MCF 10A (cell line): ENCODE measurements at regions of chr12 and their contacts with region 1.

Region 1: DNA sequence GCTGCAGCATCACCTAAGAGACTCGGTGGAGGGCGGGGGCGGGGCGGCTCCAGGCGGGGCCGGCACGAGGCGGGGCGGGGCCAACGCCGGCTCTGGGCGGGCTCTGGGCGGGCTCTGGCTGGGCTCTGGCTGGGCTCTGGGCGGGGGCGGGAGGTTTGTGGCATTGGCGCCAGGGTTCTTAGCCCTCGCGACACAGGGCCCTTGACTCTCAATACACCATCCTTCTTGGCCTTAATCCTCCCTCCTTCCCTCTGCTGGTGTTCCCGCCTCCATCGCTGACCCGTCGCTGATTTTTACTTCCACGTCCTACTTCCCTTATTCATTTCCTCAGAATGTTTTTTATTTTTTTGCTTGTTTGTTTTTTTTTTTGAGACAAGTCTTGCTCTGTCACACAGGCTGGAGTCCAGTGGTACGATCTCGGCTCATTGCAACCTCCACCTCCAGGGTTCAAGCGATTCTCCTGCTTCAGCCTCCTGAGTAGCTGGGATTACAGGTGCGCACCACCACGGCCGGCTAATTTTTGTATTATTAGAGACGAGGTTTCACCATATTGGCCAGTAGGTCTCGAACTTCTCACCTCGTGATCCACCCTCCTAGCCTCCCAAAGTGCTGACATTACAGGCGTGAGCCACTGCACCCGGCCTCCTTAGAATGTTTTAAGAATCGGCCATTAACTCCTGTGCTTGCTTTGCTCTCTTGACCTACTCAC is at the start of gene BLTP3B:
- DNase-seq: peak; percentile 82
- H3K4me3 Mint-ChIP-seq: peak within 1 kb of the TSS; percentile 89
- H3K27ac Mint-ChIP-seq: peak within 1 kb of the TSS; percentile 94
- H3K4me1 Mint-ChIP-seq: peaks cover 24% of the 10 kb centered on the region
- H3K27me3 Mint-ChIP-seq: no peaks in the 10 kb centered on the region
- CTCF ChIP-seq: no peak
- total RNA-seq, gene BLTP3B: 17.7 and 20.1 TPM in 2 replicates

Region 2: DNA sequence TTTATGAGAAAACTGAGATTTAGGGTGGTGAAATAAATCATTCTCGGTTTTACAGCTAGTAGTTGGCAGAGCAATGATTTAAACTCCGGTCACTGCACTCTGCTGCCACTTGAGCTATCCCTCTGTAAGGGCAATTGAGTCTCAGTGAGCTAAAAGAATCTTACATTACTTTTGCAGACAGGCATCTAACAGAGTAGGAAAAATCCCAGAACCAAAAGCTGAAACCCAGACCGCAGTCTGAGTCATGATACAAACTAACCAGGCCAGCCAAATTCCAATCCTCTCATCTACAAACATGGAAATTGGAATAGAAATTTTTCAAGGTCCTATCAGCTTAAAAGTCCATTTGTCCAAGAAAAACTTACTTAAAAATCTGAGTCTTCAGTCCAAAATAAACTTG is 231.9 kb before region 1 on chr12:
- CTCF ChIA-PET with region 1: interaction called, 4 read pairs
- POLR2A ChIA-PET with region 1: no interaction called
- intact Hi-C with region 1: loop called (anchors 2 kb)
- DNase-seq: peak; percentile 91
- H3K4me3 Mint-ChIP-seq: peak overlapping the region; percentile 47
- H3K27ac Mint-ChIP-seq: peak overlapping the region; percentile 83
- H3K4me1 Mint-ChIP-seq: peaks cover 59% of the 10 kb centered on the region
- H3K27me3 Mint-ChIP-seq: no peaks in the 10 kb centered on the region
- CTCF ChIP-seq: no peak

Region 3: GRCh38 chr12:99984271-99985128 is 158.5 kb before region 1 on chr12 and contains the start of gene ANKS1B:
- CTCF ChIA-PET with region 1: interaction called, 5 read pairs
- POLR2A ChIA-PET with region 1: no interaction called
- intact Hi-C with region 1: loop called (anchors 2 kb)
- DNase-seq: peak; percentile 79
- H3K4me3 Mint-ChIP-seq: peak within 1 kb of the TSS; percentile 89
- H3K27ac Mint-ChIP-seq: peak within 1 kb of the TSS; percentile 16
- H3K4me1 Mint-ChIP-seq: peaks cover 20% of the 10 kb centered on the region
- H3K27me3 Mint-ChIP-seq: no peaks in the 10 kb centered on the region
- CTCF ChIP-seq: no peak
- total RNA-seq, gene ANKS1B: 17.7 and 18.8 TPM in 2 replicates

Region 4: DNA sequence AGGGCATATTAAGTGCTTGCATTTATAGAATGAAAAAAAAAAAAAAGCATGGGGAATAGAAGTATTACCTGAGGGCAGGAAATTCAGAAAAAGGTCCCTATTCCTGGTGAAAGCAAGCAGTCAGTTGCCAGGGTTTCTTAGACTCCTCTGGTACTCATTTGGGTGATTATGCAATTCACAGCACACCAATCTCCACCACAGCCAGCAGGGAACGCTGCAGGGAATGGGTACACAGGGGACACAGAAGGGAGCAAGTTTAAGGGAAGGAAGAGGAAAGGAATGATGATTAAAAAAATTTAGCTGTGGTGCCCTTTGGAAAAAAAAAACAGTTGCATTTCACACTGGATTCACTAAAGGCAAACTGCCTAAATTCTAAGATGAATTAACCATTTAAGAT is 14.5 kb before region 1 on chr12:
- CTCF ChIA-PET with region 1: interaction called, 28 read pairs
- POLR2A ChIA-PET with region 1: interaction called, 26 read pairs
- intact Hi-C with region 1: no loop called
- DNase-seq: peak; percentile 77
- H3K4me3 Mint-ChIP-seq: peak overlapping the region; percentile 50
- H3K27ac Mint-ChIP-seq: peak overlapping the region; percentile 82
- H3K4me1 Mint-ChIP-seq: peaks cover 19% of the 10 kb centered on the region
- H3K27me3 Mint-ChIP-seq: no peaks in the 10 kb centered on the region
- CTCF ChIP-seq: peak; percentile 19

Region 5: DNA sequence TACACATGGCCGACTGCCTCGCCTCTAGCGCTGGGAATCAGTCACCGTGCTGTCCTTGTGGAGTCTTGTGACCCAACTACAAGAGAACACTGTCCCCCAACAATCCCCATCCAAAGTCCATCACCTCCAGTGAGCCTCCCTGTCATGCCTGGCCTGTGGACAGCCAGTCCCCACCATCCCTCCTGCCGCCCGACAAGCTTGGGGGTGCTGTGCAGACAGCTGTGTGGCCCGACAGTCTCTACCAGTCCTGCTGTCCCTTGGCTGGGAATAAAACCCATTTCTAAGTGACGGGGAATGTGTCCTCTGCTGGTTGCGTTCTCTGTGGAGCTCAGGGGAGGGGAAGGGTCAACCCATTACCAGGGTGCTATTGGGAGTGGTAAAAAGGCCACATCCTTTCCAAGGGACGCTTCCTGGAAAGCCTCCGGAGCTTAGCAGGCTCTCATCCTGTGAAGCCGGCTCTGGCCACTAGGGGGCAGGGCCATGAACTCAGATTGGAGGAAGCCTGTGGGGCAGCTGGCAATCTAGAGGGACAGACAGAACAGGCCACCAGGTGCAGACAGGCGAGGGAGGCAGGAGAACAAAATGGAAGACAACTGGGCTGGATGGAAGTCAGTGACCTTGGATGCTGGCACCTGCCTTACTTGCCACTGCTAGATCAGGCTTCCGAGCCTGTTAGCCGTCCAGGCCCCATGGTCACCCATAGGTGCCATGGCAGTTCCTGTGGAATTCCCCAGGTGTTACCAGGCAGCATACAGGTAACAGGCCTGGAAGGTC is 11.7 kb after region 1 on chr12:
- CTCF ChIA-PET with region 1: interaction called, 16 read pairs
- POLR2A ChIA-PET with region 1: no interaction called
- intact Hi-C with region 1: no loop called
- DNase-seq: peak; percentile 71
- H3K4me3 Mint-ChIP-seq: no peak overlapping the region
- H3K27ac Mint-ChIP-seq: no peak overlapping the region
- H3K4me1 Mint-ChIP-seq: no peaks in the 10 kb centered on the region
- H3K27me3 Mint-ChIP-seq: no peaks in the 10 kb centered on the region
- CTCF ChIP-seq: peak; percentile 85

Region 6: GRCh38 chr12:100200463-100201181 is 57.6 kb after region 1 on chr12 and contains the start of gene ACTR6:
- CTCF ChIA-PET with region 1: interaction called, 8 read pairs
- POLR2A ChIA-PET with region 1: interaction called, 24 read pairs
- intact Hi-C with region 1: loop called (anchors 1 kb)
- DNase-seq: peak; percentile 96
- H3K4me3 Mint-ChIP-seq: peak within 1 kb of the TSS; percentile 99
- H3K27ac Mint-ChIP-seq: peak within 1 kb of the TSS; percentile 93
- H3K4me1 Mint-ChIP-seq: peaks cover 10% of the 10 kb centered on the region
- H3K27me3 Mint-ChIP-seq: no peaks in the 10 kb centered on the region
- CTCF ChIP-seq: no peak
- total RNA-seq, gene ACTR6: 26.4 and 28.8 TPM in 2 replicates